ENCODE measurements at regions of chr19 and their contacts with region 1.

Region 1: DNA sequence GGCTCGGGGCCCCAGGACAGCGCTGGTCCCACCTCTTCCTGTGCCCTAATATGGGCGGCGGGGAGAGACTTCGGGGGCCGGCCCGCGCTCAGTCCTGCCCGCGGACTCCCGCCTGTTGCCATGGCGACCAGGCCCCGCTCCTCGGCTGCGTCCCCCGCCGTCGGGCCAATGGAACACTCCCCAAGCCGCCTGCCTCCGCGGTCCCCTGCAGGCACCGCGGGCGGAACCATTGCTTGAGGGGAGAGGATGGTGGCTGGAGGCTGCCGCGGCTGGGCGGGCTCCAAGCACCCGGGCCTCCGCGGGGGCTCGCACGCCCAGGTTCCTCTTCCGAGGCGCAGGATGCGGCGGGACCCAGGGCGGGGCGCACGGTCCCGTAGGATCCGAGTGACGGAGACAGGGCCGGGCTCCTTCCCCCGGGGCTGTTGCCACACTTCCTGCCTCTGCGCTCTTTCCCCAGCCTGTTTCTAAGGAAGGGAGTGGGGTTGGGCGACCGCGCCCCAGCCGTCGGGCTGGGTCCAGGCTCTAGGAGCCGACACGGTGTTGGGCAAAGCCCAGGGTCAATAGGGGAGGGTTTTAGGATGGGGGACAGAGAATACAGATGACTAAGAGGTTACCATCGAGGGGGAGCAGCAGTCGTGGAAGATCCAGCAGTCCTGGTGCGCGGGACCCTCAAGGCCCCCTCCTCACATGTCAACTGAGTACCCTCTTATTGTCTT is 1.2 kb upstream of the JUNB start:
- DNase-seq: peak; percentile 98
- H3K4me3 Mint-ChIP-seq: peak overlapping the region; percentile 94
- H3K27ac Mint-ChIP-seq: peak overlapping the region; percentile 99
- H3K4me1 Mint-ChIP-seq: peaks cover 20% of the 10 kb centered on the region
- H3K27me3 Mint-ChIP-seq: no peaks in the 10 kb centered on the region

Region 2: DNA sequence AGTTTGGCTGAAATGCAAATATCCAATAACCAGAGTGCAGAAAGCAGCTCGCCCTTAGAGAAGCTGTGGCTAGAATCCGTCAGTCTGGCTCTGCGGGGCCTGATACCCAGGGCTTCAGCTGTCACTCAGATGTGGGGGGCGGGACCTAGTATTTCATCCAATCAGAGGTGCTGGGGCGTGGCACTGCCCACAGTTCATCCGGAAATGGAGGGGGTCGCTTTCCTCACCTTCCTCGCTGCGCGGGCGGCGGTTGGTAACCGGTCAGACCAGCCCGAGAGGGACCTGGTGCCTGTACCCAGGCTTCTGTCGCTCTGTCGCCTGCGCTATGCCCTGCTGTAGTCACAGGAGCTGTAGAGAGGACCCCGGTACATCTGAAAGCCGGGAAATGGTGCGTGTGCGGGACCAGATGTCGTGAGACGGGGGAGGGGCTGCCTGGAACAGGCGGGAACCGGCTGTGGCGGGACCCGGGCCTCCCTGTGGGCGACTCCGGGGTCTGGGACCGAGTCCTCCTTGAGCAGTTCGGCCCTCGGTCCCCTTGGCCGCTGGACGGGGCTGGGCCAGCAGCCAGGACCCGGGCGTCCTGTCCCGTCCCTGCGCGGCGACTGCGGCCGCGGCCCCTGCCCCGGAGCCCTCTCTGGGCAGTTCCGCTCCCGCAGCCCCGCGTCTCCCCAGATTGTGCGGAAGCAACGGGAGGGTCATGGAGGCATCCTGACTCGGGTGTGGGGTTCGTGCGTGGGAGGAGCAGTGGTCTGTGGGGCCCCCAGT is 865.0 kb before region 1 on chr19 and contains the start of gene ZNF700:
- CTCF ChIA-PET with region 1: no interaction called
- POLR2A ChIA-PET with region 1: no interaction called
- intact Hi-C with region 1: loop called (anchors 5 kb)
- DNase-seq: peak; percentile 97
- H3K4me3 Mint-ChIP-seq: peak within 1 kb of the TSS; percentile 96
- H3K27ac Mint-ChIP-seq: peak within 1 kb of the TSS; percentile 99
- H3K4me1 Mint-ChIP-seq: peaks cover 35% of the 10 kb centered on the region
- H3K27me3 Mint-ChIP-seq: no peaks in the 10 kb centered on the region
- total RNA-seq, gene ZNF700: 12.9 to 13.0 TPM

Region 3: DNA sequence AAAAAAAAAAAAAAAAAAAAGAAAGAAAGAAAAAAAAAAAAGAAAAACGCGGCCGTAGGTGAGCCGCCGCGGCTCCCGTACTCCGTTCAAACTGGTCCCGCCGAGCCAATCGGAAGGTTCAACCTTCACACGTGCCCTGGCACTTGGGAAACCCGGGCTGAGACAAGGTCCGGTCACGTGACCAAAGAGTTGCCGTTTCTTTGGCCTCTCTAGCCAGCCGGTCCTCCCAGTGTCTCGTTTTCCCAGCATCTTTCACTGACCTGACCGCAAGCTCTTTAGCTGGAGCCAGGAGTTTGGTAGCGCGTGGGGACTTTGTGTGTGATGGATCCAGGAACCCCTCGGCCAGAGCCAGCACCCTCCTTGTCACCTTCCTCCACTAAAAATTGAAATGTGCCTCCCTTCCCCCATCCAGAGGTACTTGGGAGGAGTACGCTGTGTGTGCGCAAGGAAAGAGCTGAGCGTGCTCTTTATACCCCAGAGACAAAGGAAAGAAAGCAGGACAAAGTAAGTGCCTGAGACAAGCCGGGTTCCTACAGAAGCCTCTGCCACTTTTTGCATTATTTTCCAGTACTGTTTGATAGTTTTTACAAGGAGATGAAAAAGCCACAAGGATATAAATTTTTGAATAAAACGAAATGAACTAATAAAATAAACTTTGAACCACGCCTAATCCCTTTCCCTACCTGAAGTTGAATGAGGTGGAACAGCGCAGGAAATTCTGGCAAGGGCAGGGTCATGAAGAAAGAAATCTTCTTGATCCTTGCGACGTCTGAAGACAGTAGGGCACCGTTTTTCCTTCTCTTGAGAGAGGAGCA is 67.3 kb before region 1 on chr19:
- CTCF ChIA-PET with region 1: interaction called, 7 read pairs
- POLR2A ChIA-PET with region 1: interaction called, 24 read pairs
- intact Hi-C with region 1: loop called (anchors 5 kb)
- DNase-seq: peak; percentile 96
- H3K4me3 Mint-ChIP-seq: peak overlapping the region; percentile 92
- H3K27ac Mint-ChIP-seq: peak overlapping the region; percentile 95
- H3K4me1 Mint-ChIP-seq: peaks cover 28% of the 10 kb centered on the region
- H3K27me3 Mint-ChIP-seq: no peaks in the 10 kb centered on the region

Region 4: DNA sequence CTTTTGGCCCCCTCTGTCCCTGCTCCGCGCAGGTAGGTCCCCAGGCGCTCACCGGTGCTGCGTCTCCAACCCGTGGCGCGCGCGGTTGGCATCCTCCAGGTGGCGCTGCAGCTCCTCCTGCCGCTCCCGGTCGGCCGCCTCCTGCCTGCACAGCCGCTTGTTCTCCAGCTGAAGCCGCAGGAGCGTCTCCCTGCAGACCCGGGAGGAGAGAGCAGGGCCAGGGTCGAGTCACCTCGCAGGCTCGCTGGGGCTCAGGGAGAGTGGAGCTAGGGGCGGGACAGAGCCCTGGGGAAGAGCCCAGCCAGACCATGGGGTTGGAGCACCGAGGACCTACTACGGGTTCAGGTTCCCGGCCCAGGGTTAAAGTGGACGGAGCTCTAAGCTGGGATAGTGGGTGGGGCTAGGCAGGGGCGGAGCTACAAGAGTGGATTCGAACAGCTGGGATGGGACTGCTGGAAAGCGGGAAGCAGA is 24.0 kb before region 1 on chr19:
- CTCF ChIA-PET with region 1: interaction called, 636 read pairs
- POLR2A ChIA-PET with region 1: interaction called, 21 read pairs
- intact Hi-C with region 1: no loop called
- DNase-seq: peak; percentile 91
- H3K4me3 Mint-ChIP-seq: peak overlapping the region; percentile 43
- H3K27ac Mint-ChIP-seq: no peak overlapping the region
- H3K4me1 Mint-ChIP-seq: peaks cover 12% of the 10 kb centered on the region
- H3K27me3 Mint-ChIP-seq: no peaks in the 10 kb centered on the region

Region 5: GRCh38 chr19:12821761-12822160 is 31.7 kb after region 1 on chr19:
- CTCF ChIA-PET with region 1: no interaction called
- POLR2A ChIA-PET with region 1: no interaction called
- intact Hi-C with region 1: no loop called
- DNase-seq: no peak
- H3K4me3 Mint-ChIP-seq: no peak overlapping the region
- H3K27ac Mint-ChIP-seq: no peak overlapping the region
- H3K4me1 Mint-ChIP-seq: peaks cover 9% of the 10 kb centered on the region
- H3K27me3 Mint-ChIP-seq: peaks cover 20% of the 10 kb centered on the region

Region 6: DNA sequence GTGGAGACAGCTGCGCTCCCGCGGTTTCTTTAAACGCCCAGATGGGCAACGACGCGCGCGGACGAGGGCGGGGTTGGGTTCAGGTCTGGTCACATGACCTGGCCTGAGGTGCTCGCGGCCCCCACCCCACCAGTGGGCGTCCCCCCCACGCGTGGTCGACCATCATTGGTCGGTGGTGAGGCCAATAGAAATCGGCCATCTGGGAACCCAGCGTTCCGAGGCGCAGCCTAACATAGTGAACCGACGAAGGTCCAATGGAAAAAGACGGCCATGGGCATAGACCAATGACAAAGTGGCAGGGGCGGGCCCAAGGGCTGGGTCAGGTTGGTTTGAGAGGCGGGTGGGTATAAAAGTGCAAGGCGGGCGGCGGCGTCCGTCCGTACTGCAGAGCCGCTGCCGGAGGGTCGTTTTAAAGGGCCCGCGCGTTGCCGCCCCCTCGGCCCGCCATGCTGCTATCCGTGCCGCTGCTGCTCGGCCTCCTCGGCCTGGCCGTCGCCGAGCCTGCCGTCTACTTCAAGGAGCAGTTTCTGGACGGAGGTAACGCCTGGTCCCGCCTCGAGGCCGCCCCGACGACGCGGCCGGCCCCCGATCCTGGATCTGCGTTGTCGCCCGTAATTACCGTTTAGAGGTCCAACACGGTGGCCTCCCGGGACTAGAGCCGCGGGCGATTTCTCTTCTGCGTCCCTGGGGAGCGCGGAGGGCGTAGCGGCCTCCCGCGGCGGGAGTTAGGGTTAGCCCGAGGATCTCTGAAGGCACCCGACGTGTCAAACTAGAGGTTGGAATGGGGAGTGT is 148.4 kb after region 1 on chr19 and contains the start of gene CALR:
- CTCF ChIA-PET with region 1: no interaction called
- POLR2A ChIA-PET with region 1: no interaction called
- intact Hi-C with region 1: loop called (anchors 2 kb)
- DNase-seq: peak; percentile 99
- H3K4me3 Mint-ChIP-seq: peak within 1 kb of the TSS; percentile 98
- H3K27ac Mint-ChIP-seq: peak within 1 kb of the TSS; percentile 95
- H3K4me1 Mint-ChIP-seq: peaks cover 53% of the 10 kb centered on the region
- H3K27me3 Mint-ChIP-seq: no peaks in the 10 kb centered on the region
- total RNA-seq, gene CALR: 625 to 642 TPM

Region 7: DNA sequence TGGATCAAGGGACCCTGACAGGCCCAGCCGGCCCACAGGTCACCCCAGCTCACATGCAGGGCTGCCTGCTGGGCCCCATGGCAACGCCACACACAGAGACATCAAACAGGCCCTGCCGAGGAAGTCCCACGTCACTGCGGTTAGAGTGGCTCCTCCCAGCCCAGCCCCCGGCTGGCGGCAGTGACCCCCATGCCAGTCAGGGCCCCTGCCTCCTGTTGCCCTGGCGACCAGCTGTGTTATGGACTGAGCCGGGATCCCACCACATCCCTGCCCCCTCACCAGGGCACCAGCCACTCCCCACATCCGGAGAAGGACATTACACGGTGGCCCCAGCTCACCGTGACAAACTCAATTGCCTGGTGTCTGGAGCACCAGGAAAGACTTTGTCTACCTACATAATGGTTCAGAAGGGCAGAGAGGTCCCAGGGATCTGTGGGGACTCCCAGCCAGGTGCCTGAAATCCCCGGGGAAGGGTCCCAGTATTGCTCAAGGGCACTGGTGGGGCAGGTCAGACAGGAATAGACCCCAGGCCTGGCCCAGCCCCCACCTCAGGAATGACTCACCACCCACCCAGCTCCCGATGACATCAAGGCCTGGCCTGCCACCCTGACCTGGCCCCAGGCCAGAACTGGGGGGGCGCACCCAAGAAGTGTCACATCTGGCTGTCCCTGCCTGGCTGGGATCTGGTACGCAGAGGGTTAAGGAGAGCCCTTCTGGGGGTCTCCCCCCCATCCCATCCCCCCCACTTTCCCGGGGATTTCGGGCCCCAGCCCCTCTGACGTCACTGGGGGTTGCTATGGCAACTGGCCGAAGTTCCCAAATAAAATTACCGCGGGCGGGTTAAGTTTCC is 1056.7 kb after region 1 on chr19:
- CTCF ChIA-PET with region 1: no interaction called
- POLR2A ChIA-PET with region 1: interaction called, 3 read pairs
- intact Hi-C with region 1: loop called (anchors 5 kb)
- DNase-seq: peak; percentile 98
- H3K4me3 Mint-ChIP-seq: peak overlapping the region; percentile 78
- H3K27ac Mint-ChIP-seq: peak overlapping the region; percentile 97
- H3K4me1 Mint-ChIP-seq: peaks cover 57% of the 10 kb centered on the region
- H3K27me3 Mint-ChIP-seq: no peaks in the 10 kb centered on the region